ENCODE measurements at regions of chrX and their contacts with region 1.

Region 1: GRCh38 chrX:40097497-40098263 is at the start of gene BCOR:
- DNase-seq: peak; percentile 51
- H3K4me3 ChIP-seq: peak within 1 kb of the TSS; percentile 55 to 72 (median 59)
- H3K27ac ChIP-seq: peak within 1 kb of the TSS; percentile 41
- H3K4me1 ChIP-seq: peaks cover 12% of the 10 kb centered on the region
- H3K27me3 ChIP-seq: no peaks in the 10 kb centered on the region
- CTCF ChIP-seq: no peak
- POLR2A ChIP-seq: peak; percentile 74
- total RNA-seq, gene BCOR: 23.9 and 24.2 TPM in 2 replicates

Region 2: DNA sequence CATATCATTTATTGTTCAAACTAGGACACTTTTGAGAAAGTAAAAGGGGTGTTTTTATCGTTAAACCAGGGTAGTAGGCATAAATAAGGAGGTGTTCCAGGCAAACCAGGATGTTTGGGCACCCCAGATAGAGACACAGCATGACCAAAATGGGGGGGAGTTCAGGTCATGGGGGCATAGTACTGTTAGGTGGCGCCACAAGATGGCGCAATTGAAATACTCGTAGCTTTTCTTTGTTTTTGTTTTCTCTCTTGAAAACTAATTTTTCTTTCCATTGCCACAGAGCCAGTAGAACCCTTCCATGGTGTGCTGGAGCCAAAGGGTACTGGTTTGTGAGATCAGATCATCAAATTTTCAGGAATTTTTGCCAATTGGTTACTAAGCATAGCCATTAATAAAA is 283.3 kb before region 1 on chrX:
- CTCF ChIA-PET with region 1: no interaction called
- POLR2A ChIA-PET with region 1: no interaction called
- dilution Hi-C with region 1: no loop called
- intact Hi-C with region 1: loop called (anchors 5 kb)
- DNase-seq: peak; percentile 20
- H3K4me3 ChIP-seq: no peak overlapping the region
- H3K27ac ChIP-seq: no peak overlapping the region
- H3K4me1 ChIP-seq: peaks cover 16% of the 10 kb centered on the region
- H3K27me3 ChIP-seq: no peaks in the 10 kb centered on the region
- CTCF ChIP-seq: peak; percentile 27 to 31
- POLR2A ChIP-seq: no peak

Region 3: GRCh38 chrX:39820938-39821708 is 276.6 kb before region 1 on chrX:
- CTCF ChIA-PET with region 1: no interaction called
- POLR2A ChIA-PET with region 1: no interaction called
- dilution Hi-C with region 1: no loop called
- intact Hi-C with region 1: loop called (anchors 5 kb)
- DNase-seq: peak; percentile 13
- H3K4me3 ChIP-seq: peak overlapping the region in 2 of 3 experiments; percentile 11 to 37
- H3K27ac ChIP-seq: no peak overlapping the region
- H3K4me1 ChIP-seq: peaks cover 7% of the 10 kb centered on the region
- H3K27me3 ChIP-seq: no peaks in the 10 kb centered on the region
- CTCF ChIP-seq: no peak
- POLR2A ChIP-seq: no peak

Region 4: GRCh38 chrX:39848900-39849299 is 248.8 kb before region 1 on chrX:
- CTCF ChIA-PET with region 1: no interaction called
- POLR2A ChIA-PET with region 1: no interaction called
- dilution Hi-C with region 1: no loop called
- intact Hi-C with region 1: no loop called
- DNase-seq: no peak
- H3K4me3 ChIP-seq: no peak overlapping the region
- H3K27ac ChIP-seq: no peak overlapping the region
- H3K4me1 ChIP-seq: no peaks in the 10 kb centered on the region
- H3K27me3 ChIP-seq: no peaks in the 10 kb centered on the region
- CTCF ChIP-seq: no peak
- POLR2A ChIP-seq: no peak

Region 5: GRCh38 chrX:40040686-40041461 is 56.8 kb before region 1 on chrX:
- CTCF ChIA-PET with region 1: no interaction called
- POLR2A ChIA-PET with region 1: interaction called, 10 read pairs
- dilution Hi-C with region 1: no loop called
- intact Hi-C with region 1: no loop called
- DNase-seq: no peak
- H3K4me3 ChIP-seq: no peak overlapping the region
- H3K27ac ChIP-seq: no peak overlapping the region
- H3K4me1 ChIP-seq: peaks cover 8% of the 10 kb centered on the region
- H3K27me3 ChIP-seq: no peaks in the 10 kb centered on the region
- CTCF ChIP-seq: no peak
- POLR2A ChIP-seq: no peak

Measured in endothelial cell of umbilical vein (primary cell).